ENCODE measurements at regions of chr3 and their contacts with region 1.

Region 1: DNA sequence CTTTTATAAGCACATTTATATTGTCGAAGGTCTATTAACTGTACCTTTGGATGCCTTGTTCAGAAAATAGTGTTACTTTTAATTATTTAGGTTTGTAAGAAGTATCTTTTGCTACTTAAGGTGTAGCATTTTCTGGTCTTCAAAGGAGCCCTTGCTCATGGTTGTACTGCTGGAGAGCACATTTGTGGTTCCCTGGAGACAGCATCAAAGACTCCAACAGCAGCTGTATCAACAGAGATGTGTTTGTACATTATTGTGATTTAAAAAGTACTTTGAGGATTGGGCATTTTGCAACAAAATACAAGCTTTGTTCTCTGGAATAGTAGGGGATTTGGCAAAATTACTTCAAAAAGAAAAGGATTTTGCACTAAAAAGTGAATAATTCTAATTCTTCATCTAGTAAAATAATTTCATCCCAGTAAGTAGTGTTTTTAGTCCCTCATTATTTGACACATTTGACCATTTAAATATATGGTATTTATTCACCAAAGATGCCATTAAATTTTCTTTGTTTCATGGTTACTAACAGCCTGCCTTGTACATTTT is 16.5 kb downstream of the TBC1D23 start:
- DNase-seq: no peak
- ATAC-seq: no peak
- H3K4me3 ChIP-seq: no peak overlapping the region
- H3K4me3 Mint-ChIP-seq: no peak overlapping the region
- H3K27ac ChIP-seq: no peak overlapping the region
- H3K27ac Mint-ChIP-seq: no peak overlapping the region
- H3K4me1 ChIP-seq: no peaks in the 10 kb centered on the region
- H3K4me1 Mint-ChIP-seq: peaks cover 17% of the 10 kb centered on the region
- H3K27me3 ChIP-seq: no peaks in the 10 kb centered on the region
- H3K27me3 Mint-ChIP-seq: no peaks in the 10 kb centered on the region
- CTCF ChIP-seq: no peak

Region 2: DNA sequence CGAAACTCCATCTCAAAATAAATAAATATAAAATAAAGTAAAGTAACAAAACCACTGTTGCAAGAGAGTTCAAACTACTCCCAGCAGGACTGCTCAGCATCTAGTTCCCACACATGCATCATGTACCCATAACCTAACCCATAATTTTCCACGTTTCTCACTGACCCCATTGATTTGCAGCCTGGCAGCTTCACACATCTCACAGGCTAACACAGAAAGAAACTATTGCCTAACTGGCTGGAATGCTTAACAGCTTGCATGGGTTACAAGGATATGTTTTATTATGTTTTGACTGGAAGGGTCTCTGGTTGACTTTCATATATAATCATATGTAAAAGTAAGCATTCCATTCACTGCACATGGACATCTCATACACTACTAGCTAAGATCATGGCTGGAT is 72.2 kb before region 1 on chr3:
- CTCF ChIA-PET with region 1: no interaction called
- POLR2A ChIA-PET with region 1: no interaction called
- intact Hi-C with region 1: no loop called
- DNase-seq: no peak
- ATAC-seq: no peak
- H3K4me3 ChIP-seq: no peak overlapping the region
- H3K4me3 Mint-ChIP-seq: no peak overlapping the region
- H3K27ac ChIP-seq: no peak overlapping the region
- H3K27ac Mint-ChIP-seq: no peak overlapping the region
- H3K4me1 ChIP-seq: peaks cover 0 to 2% of the 10 kb centered on the region in 2 donors
- H3K4me1 Mint-ChIP-seq: peaks cover 3% of the 10 kb centered on the region
- H3K27me3 ChIP-seq: no peaks in the 10 kb centered on the region
- H3K27me3 Mint-ChIP-seq: no peaks in the 10 kb centered on the region
- CTCF ChIP-seq: no peak

Region 3: GRCh38 chr3:100231668-100232067 is 45.7 kb before region 1 on chr3:
- CTCF ChIA-PET with region 1: no interaction called
- POLR2A ChIA-PET with region 1: no interaction called
- intact Hi-C with region 1: loop called (anchors 1 kb)
- DNase-seq: no peak
- ATAC-seq: no peak
- H3K4me3 ChIP-seq: no peak overlapping the region
- H3K4me3 Mint-ChIP-seq: no peak overlapping the region
- H3K27ac ChIP-seq: no peak overlapping the region
- H3K27ac Mint-ChIP-seq: no peak overlapping the region
- H3K4me1 ChIP-seq: no peaks in the 10 kb centered on the region
- H3K4me1 Mint-ChIP-seq: peaks cover 2% of the 10 kb centered on the region
- H3K27me3 ChIP-seq: no peaks in the 10 kb centered on the region
- H3K27me3 Mint-ChIP-seq: peaks cover 6% of the 10 kb centered on the region
- CTCF ChIP-seq: no peak

Region 4: DNA sequence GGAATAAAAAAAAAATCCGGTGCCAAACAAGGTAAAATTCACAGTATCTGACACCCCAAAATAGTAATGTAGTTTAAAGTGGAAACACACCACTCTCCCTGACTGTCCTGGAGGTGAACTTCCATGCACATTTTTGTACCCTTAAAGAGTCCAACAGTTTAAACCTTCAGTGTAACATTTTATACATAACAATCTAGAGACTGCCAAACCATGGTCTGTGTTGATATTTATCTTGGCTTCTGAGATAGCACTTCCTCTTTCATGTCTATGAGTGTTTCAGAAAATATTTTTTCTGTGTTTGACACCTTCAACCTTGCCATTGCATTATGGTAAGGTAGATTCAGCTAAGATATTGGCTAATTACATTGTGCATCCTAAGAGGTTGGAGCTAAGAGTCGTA is 229.0 kb after region 1 on chr3:
- CTCF ChIA-PET with region 1: no interaction called
- POLR2A ChIA-PET with region 1: no interaction called
- intact Hi-C with region 1: no loop called
- DNase-seq: no peak
- ATAC-seq: no peak
- H3K4me3 ChIP-seq: no peak overlapping the region
- H3K4me3 Mint-ChIP-seq: no peak overlapping the region
- H3K27ac ChIP-seq: no peak overlapping the region
- H3K27ac Mint-ChIP-seq: no peak overlapping the region
- H3K4me1 ChIP-seq: no peaks in the 10 kb centered on the region
- H3K4me1 Mint-ChIP-seq: no peaks in the 10 kb centered on the region
- H3K27me3 ChIP-seq: peaks cover 0 to 9% (median 0%) of the 10 kb centered on the region in 4 experiments
- H3K27me3 Mint-ChIP-seq: peaks cover 47% of the 10 kb centered on the region
- CTCF ChIP-seq: no peak